Activated CD8-positive, alpha-beta T cell treated with anti-CD3 and anti-CD28 coated beads for 36 hours (primary cell): ENCODE measurements at regions of chr10 and their contacts with region 1.

Region 1: DNA sequence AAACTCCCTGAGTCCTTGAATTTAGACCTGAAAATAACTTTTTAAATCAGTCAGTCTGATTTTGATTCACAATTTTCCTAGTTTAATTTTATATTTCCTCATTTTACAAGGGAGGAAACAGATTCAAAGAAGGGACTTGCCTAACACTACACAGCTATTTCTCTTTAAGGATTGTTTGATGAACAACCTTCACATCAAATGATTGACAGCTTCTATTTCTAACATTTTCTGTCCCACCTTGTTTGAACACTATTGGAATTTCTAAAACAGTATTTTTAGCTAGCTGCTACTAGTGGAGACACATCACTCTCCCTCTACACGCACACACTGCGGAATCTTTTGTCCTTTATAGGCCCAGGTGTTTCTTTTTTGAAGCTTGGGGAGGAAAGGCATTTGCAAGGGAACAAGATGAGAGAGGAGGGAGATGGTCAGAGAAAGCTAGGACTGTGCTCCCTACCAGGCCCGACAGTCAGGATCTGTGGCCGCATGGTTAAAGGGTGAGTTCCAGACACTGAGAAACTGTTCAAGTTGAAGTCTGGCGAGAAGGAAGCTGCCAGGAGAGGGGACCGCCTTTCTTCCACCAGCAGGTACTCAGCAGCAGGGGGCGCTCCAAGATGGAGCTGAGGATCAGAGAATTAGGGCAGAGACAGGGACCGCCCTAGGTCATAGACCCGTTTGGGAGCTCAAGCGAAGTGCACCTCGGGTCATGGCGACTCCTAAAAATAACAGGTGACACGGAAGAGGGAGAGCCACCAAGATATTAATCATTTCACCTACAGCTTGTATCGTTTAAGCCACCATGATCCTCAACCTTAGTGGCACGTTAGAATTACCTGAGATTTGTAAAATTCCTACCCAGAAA is 49.7 kb downstream of the DNAJC12 start:
- DNase-seq: peak; percentile 92
- ATAC-seq: peak; percentile 71
- H3K4me3 Mint-ChIP-seq: no peak overlapping the region
- H3K27ac Mint-ChIP-seq: peak overlapping the region; percentile 26
- H3K4me1 Mint-ChIP-seq: peaks cover 48% of the 10 kb centered on the region
- H3K27me3 Mint-ChIP-seq: no peaks in the 10 kb centered on the region
- CTCF ChIP-seq: peak; percentile 83

Region 2: DNA sequence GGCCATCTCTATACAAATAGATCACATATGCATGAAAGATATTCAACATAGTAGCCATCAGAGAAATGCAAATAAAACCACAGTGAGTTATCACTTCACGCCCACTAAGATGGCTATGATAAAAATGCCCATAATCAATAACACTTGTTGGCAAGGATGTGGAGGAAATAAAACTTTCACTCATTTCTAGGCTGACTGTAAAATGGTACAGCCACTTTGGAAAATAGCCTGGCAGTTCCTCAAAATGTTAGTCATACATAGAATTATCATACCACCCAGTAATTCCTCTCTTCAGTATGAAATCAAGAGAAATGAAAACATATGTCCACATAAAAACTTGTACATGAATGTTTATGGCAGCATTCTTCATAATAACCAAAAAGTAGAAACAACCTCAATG is 537.6 kb before region 1 on chr10:
- CTCF ChIA-PET with region 1: no interaction called
- POLR2A ChIA-PET with region 1: no interaction called
- intact Hi-C with region 1: no loop called
- DNase-seq: no peak
- ATAC-seq: no peak
- H3K4me3 Mint-ChIP-seq: no peak overlapping the region
- H3K27ac Mint-ChIP-seq: no peak overlapping the region
- H3K4me1 Mint-ChIP-seq: no peaks in the 10 kb centered on the region
- H3K27me3 Mint-ChIP-seq: no peaks in the 10 kb centered on the region
- CTCF ChIP-seq: no peak

Region 3: DNA sequence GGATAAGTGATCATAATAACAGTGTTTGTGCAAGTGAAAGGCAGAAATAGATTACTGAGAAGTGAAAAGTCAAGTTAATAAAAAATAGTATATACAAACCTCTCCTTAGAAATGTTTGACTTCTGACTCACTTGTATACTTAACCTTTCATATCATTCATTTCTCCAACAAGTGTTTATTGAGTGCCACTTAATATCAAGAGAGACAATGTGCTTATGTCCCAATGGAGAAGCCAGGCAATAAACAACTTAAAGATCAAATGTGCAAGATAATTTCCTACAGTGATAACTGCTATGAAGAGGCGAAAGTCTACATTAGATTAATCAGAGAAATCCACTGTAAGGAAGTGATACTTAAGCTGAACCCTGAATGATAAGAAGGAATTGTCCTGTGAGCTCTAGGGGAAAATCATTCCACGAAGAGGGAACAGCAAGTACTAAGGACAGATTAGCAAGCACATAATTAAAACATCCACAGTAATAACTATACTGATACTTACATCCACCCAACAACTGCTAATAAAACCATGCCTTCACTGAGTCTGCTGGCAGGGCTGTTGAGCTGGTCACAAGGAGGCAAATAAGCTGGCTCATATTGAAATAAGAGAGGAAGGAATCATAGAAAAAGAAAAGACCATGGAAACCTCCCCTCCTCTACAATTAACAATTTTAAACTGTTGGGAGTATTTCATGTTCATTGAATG is 295.8 kb before region 1 on chr10:
- CTCF ChIA-PET with region 1: no interaction called
- POLR2A ChIA-PET with region 1: no interaction called
- intact Hi-C with region 1: no loop called
- DNase-seq: no peak
- ATAC-seq: no peak
- H3K4me3 Mint-ChIP-seq: no peak overlapping the region
- H3K27ac Mint-ChIP-seq: no peak overlapping the region
- H3K4me1 Mint-ChIP-seq: no peaks in the 10 kb centered on the region
- H3K27me3 Mint-ChIP-seq: peaks cover under 1% of the 10 kb centered on the region
- CTCF ChIP-seq: no peak

Region 4: GRCh38 chr10:67676203-67676825 is 111.9 kb before region 1 on chr10:
- CTCF ChIA-PET with region 1: no interaction called
- POLR2A ChIA-PET with region 1: no interaction called
- intact Hi-C with region 1: no loop called
- DNase-seq: no peak
- ATAC-seq: no peak
- H3K4me3 Mint-ChIP-seq: no peak overlapping the region
- H3K27ac Mint-ChIP-seq: no peak overlapping the region
- H3K4me1 Mint-ChIP-seq: no peaks in the 10 kb centered on the region
- H3K27me3 Mint-ChIP-seq: peaks cover 18% of the 10 kb centered on the region
- CTCF ChIP-seq: no peak

Region 5: GRCh38 chr10:67735430-67735829 is 52.8 kb before region 1 on chr10:
- CTCF ChIA-PET with region 1: no interaction called
- POLR2A ChIA-PET with region 1: no interaction called
- intact Hi-C with region 1: no loop called
- DNase-seq: no peak
- ATAC-seq: no peak
- H3K4me3 Mint-ChIP-seq: no peak overlapping the region
- H3K27ac Mint-ChIP-seq: no peak overlapping the region
- H3K4me1 Mint-ChIP-seq: peaks cover 5% of the 10 kb centered on the region
- H3K27me3 Mint-ChIP-seq: peaks cover 2% of the 10 kb centered on the region
- CTCF ChIP-seq: no peak

Region 6: GRCh38 chr10:67803588-67804394 is 15.5 kb after region 1 on chr10:
- CTCF ChIA-PET with region 1: interaction called, 17 read pairs
- POLR2A ChIA-PET with region 1: interaction called, 4 read pairs
- intact Hi-C with region 1: no loop called
- DNase-seq: peak; percentile 59
- ATAC-seq: peak; percentile 91
- H3K4me3 Mint-ChIP-seq: no peak overlapping the region
- H3K27ac Mint-ChIP-seq: peak overlapping the region; percentile 87
- H3K4me1 Mint-ChIP-seq: peaks cover 25% of the 10 kb centered on the region
- H3K27me3 Mint-ChIP-seq: no peaks in the 10 kb centered on the region
- CTCF ChIP-seq: no peak

Region 7: DNA sequence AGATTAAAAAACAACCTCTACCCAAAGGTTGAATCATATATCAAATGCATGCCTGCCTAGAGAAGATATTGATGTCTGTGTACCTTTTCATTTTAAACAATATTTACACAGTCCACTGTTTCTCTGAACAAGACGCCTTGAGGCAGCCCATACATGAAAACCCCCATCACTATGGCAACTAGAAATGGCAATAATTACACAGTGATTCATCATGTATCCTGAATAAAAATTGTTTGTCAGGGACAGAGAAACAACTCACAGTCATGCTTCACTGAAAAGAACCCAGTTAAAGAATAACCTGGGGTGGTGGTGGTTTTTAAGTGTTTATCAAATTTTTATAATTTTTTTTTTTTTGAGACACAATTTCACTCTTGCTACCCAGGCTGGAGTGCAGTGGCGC is 30.1 kb after region 1 on chr10:
- CTCF ChIA-PET with region 1: interaction called, 14 read pairs
- POLR2A ChIA-PET with region 1: interaction called, 4 read pairs
- intact Hi-C with region 1: no loop called
- DNase-seq: no peak
- ATAC-seq: peak; percentile 61
- H3K4me3 Mint-ChIP-seq: no peak overlapping the region
- H3K27ac Mint-ChIP-seq: peak overlapping the region; percentile 57
- H3K4me1 Mint-ChIP-seq: peaks cover 43% of the 10 kb centered on the region
- H3K27me3 Mint-ChIP-seq: peaks cover 3% of the 10 kb centered on the region
- CTCF ChIP-seq: no peak

Region 8: DNA sequence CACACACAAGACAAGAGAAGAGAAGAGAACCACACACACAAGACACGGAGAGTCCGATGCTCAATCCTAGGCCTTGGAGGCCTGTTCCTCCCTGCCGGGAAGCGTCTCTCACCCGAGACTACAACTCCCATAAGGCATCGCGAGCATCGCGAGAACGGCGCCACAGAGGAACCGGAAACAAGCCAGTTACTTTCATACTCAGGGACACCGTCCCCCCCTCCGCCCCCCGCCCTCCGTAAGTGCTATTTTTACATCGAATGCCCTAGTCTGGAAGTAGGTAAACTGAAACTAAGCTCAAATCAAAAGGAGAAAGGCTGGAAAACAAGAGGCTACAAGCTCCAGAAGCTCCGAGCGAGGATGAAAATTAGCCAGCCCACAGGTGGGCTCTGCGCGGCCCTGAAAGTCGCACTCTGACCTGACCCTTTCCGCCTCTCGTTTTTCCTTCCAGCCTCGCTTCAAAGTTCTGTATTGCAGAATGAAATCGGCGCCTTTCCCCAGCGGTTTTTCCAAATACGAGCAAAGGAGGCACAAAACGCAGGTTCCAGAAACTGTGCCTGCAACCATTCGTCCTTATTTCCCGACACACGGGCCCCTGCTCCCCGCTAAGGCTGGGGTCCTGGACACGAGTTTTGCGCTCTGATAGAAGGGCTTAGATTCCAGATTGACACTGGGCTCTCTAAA is 61.2 kb after region 1 on chr10:
- CTCF ChIA-PET with region 1: interaction called, 38 read pairs
- POLR2A ChIA-PET with region 1: interaction called, 5 read pairs
- intact Hi-C with region 1: loop called (anchors 5 kb)
- DNase-seq: peak; percentile 97
- ATAC-seq: peak; percentile 97
- H3K4me3 Mint-ChIP-seq: peak overlapping the region; percentile 88
- H3K27ac Mint-ChIP-seq: peak overlapping the region; percentile 94
- H3K4me1 Mint-ChIP-seq: peaks cover 12% of the 10 kb centered on the region
- H3K27me3 Mint-ChIP-seq: no peaks in the 10 kb centered on the region
- CTCF ChIP-seq: no peak

Region 9: GRCh38 chr10:68156373-68157185 is 368.3 kb after region 1 on chr10:
- CTCF ChIA-PET with region 1: interaction called, 69 read pairs
- POLR2A ChIA-PET with region 1: interaction called, 3 read pairs
- intact Hi-C with region 1: loop called (anchors 5 kb)
- DNase-seq: peak; percentile 80
- ATAC-seq: no peak
- H3K4me3 Mint-ChIP-seq: no peak overlapping the region
- H3K27ac Mint-ChIP-seq: no peak overlapping the region
- H3K4me1 Mint-ChIP-seq: no peaks in the 10 kb centered on the region
- H3K27me3 Mint-ChIP-seq: no peaks in the 10 kb centered on the region
- CTCF ChIP-seq: peak; percentile 95